K562 (cell line): ENCODE measurements at regions of chr9 and their contacts with region 1.

Region 1: GRCh38 chr9:33239921-33240320 is at the start of gene SPINK4:
- DNase-seq: peak; percentile 78 to 88 (median 84)
- ATAC-seq: peak; percentile 90
- H3K4me3 ChIP-seq: no peak within 1 kb of the TSS
- H3K27ac ChIP-seq: no peak within 1 kb of the TSS
- H3K4me1 ChIP-seq: peaks cover 17 to 20% of the 10 kb centered on the region in 2 experiments; a peak in 4 of 5 replicates
- H3K27me3 ChIP-seq: no peaks in the 10 kb centered on the region
- CTCF ChIP-seq: no peak
- EP300 ChIP-seq: peak; percentile 93
- POLR2A ChIP-seq: no peak
- RAD21 ChIP-seq: no peak
- polyA plus RNA-seq, gene SPINK4: 3.9 to 5.5 TPM

Region 2: DNA sequence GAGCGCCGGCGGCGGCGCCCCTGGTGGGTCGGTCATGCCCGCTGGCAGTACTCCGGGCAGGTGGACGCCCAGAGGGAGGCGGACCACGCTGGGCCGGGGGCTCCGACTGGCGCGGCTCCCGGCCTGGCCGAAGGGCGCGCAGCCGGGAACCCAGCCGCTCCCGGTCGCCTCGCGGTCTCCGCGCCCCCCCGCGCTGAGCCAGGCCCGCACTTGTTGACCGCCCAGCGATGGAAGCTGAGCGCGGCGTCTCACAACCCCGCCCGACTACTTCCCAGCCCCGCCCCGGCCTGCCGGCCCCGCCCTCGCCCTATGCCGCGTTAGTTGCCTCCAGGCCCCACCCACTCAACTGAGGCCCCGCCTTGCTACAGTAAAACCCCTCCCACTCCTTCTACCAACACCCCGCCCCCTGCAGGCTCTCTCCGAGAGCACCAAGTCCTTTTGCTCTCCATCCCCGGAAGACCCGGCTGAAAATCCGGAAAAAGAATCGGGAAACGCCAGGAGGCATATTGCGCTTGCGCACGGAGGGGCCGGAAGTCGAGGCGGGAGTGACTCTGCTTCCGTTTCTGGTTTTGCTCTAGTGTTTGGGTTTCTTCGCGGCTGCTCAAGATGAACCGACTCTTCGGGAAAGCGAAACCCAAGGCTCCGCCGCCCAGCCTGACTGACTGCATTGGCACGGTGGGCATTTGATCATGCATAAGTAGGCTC is 24.7 kb after region 1 on chr9 and contains the starts of genes BAG1 and CHMP5:
- CTCF ChIA-PET with region 1: no interaction called
- POLR2A ChIA-PET with region 1: interaction called, 3 read pairs
- in situ Hi-C with region 1: no loop called
- intact Hi-C with region 1: loop called (anchors 2 kb)
- DNase-seq: peak; percentile 90 to 97 (median 94)
- ATAC-seq: peak; percentile 96
- H3K4me3 ChIP-seq: peak within 1 kb of the TSS; percentile 80
- H3K27ac ChIP-seq: peak within 1 kb of the TSS; percentile 94
- H3K4me1 ChIP-seq: peaks cover 5 to 28% of the 10 kb centered on the region in 2 experiments; a peak in 3 of 5 replicates
- H3K27me3 ChIP-seq: no peaks in the 10 kb centered on the region
- CTCF ChIP-seq: peak in 2 of 3 experiments; percentile 20 to 28; a peak in 3 of 6 replicates
- EP300 ChIP-seq: no peak
- POLR2A ChIP-seq: peak; percentile 67
- RAD21 ChIP-seq: no peak
- polyA plus RNA-seq, gene BAG1: 9.7 to 10.0 TPM
- polyA plus RNA-seq, gene CHMP5: 99.5 to 105 TPM

Region 3: DNA sequence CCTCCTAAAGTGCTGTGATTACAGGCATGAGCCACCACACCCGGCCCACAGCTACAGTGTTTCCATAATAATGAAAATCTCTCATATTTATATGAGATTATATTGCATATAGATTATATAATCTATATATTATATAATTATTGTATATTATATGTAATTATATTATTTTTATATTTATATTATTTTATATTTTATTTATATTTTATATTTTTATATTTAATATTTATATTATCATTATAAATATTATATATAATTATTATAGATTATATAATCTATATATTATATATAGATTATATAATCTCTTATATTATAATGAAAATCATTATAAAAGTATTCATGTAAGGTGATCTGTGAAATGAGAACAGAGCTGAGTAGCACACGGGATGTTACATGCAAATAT is 295.6 kb after region 1 on chr9:
- CTCF ChIA-PET with region 1: no interaction called
- POLR2A ChIA-PET with region 1: no interaction called
- in situ Hi-C with region 1: no loop called
- intact Hi-C with region 1: no loop called
- DNase-seq: no peak
- ATAC-seq: no peak
- H3K4me3 ChIP-seq: no peak overlapping the region
- H3K27ac ChIP-seq: no peak overlapping the region
- H3K4me1 ChIP-seq: no peaks in the 10 kb centered on the region
- H3K27me3 ChIP-seq: no peaks in the 10 kb centered on the region
- CTCF ChIP-seq: no peak
- EP300 ChIP-seq: no peak
- POLR2A ChIP-seq: no peak
- RAD21 ChIP-seq: no peak